AG04450 (cell line): ENCODE measurements at regions of chr18 and their contacts with region 1.

Region 1: DNA sequence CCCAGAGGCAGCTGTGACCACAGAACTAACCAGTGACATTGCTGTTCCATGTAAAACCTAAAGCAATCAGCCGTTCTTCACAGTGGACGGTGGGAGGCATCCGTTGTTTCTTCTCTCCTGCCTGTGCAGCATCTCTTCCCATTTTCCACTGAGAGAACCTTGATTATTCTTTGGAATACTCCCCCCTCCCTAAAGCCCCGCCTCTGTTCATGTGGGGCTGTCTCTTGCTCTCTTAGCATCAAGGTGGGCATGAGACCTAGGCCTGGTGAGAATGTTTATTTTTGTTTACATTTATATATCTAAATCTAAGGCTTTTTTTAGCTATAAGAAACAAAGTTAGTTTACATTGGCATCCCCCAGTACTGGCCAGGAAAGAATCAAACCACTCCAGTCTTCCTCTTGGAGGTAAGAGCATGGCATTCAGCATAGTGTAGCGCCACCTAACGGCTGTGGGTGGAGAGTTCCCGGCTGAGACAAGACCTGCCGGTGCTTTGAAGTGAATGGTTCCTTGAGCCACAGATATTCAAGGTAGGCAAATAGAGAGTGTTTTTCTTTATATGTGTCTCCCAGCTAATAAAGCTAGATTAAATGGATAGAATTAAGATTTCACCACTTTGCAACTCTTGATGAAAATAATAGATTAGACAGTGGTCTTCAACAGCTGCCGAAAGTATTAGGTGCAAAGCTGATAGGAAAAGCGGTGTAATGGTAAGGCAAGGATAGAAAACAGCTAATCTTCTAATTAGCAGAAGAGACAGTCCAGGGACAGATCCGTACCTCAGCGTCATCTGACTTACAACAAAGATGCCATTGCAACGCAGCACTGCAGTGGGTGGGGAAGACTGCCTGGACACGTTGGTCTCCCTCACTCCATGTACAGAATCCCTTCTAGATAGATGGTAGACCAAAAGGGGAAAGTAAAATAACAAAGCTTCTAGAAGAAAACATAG is 219.6 kb upstream of the RAB12 start:
- DNase-seq: peak; percentile 24
- H3K4me3 ChIP-seq: no peak overlapping the region
- H3K27ac ChIP-seq: no peak overlapping the region
- H3K27me3 ChIP-seq: no peaks in the 10 kb centered on the region
- CTCF ChIP-seq: peak; percentile 89

Region 2: DNA sequence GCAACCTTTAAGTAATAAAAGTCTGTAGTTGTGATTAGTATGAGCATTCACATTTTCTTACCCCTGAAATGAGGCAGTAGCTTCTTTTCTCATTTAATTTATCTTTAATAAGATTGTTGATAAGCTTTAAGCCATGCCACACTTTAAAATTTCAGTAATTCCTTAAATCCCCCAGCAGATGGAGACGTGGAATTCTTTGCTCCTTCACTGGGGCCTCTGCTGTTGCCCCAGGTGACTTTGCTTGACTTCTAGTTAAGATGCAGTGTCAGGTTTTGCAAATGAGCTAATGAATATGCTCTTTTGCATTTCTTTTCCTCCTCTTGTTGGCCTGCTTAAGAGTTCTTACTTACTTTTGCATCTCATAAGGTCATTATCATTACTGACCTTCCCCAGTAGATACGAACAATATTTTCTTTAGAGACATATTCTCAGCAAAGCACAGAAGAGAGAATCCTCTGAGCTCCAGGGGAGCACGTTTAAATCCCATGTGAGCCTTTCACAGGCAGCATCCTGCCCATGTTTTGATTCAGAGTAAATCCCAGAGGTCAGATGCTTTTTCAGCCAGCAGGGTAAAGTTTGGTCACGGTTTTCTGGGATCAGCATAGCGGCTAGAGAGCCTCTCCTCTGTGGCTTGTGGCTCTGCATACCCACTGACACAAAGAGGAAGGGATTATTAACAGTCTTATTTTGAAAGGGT is 599.7 kb before region 1 on chr18:
- CTCF ChIA-PET with region 1: interaction called, 49 read pairs
- POLR2A ChIA-PET with region 1: no interaction called
- DNase-seq: peak; percentile 26
- H3K4me3 ChIP-seq: no peak overlapping the region
- H3K27ac ChIP-seq: no peak overlapping the region
- H3K27me3 ChIP-seq: no peaks in the 10 kb centered on the region
- CTCF ChIP-seq: peak; percentile 62

Region 3: DNA sequence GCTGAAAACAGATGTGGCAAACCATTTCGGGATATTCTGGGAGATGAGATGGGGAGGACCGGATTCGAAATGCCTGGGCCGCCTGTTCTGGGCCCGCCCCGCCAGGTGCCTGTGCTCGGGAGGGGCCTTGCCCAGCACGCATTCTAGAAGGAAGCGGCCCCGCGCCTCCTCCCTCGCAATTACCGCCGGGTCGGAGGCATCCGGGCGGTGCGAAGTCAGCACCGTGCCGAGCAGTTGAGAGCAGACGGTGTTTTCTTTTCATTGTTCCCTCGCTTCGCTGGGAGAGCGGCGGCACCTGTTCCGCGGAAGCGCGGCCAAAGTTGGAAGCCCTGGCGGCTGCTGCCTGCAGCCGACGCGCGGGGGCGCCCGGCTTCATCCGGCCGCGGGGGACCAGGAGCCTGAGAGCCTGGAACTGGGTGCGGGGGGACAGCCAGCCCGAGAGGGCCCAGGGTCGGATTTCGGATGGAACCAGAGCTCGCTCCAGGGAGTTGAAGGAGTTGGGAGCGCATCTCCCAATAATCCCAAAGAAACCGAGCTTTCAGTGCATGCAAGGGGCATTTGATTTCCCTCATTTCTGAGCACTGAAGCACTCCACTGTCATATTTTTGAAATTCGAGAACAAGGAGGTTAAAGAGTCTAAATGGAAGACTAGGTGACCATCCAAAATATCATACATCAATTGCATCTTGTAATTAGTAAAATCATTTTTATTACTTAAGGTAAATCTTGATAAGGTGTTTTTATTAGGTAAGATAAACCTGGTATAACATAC is 22.3 kb before region 1 on chr18:
- CTCF ChIA-PET with region 1: interaction called, 16 read pairs
- POLR2A ChIA-PET with region 1: no interaction called
- DNase-seq: no peak
- H3K4me3 ChIP-seq: peak overlapping the region; percentile 35; the same call in 1 of the 2 replicates
- H3K27ac ChIP-seq: no peak overlapping the region
- H3K27me3 ChIP-seq: peaks cover 11% of the 10 kb centered on the region
- CTCF ChIP-seq: peak; percentile 61